Sigmoid colon (tissue), 7 donors: ENCODE measurements at regions of chr9 and their contacts with region 1.

Region 1: DNA sequence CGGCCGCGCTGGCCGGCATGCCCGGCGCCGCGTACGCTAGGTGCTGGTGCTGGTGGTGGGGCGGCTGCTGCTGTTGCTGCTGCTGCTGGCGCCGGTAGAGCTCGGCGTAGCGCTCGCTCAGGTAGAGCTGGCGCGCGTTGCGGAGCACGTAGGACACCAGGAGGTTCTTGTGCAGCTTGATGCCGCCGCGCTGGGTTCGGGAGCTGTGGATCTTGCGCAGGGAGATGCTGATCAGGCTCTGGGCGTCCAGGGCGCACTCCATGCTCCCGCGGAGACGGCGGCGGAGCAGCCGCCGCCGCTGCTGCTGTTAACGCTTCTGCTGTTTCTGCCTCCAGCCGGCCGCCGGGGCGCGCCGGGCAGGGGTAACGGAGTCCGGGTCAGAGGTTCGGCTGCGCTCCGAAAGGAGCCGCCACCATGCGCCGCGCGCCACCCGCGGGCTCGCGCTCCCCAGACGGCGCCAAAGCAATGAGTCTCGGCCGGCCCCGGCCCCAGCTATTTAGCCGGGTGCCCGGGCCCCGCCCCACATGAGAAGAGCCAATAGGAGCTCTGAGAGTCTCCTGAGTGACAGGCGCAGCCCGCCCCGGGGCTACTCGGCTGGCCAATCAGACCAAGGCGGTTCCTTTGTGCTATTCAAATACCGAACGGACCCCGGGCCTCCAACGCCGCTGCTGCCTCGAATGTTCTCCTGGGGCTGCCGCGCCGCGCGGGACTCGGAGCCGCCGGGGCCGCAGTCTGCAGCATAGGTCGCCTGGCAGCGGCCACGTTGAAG is at the start of gene IER5L:
- DNase-seq: peak; percentile 99
- H3K4me3 ChIP-seq: peak within 1 kb of the TSS; percentile 80 to 96 (median 93)
- H3K27ac ChIP-seq: peak within 1 kb of the TSS; percentile 97 to 99 (median 98)
- H3K4me1 ChIP-seq: peaks cover 0 to 34% (median 23%) of the 10 kb centered on the region in 4 donors
- H3K27me3 ChIP-seq: no peaks in the 10 kb centered on the region
- CTCF ChIP-seq: no peak
- EP300 ChIP-seq: no peak
- POLR2A ChIP-seq: peak; percentile 88 to 95
- total RNA-seq, gene IER5L: 4.4 to 17.4 (median 10.2) TPM

Region 2: DNA sequence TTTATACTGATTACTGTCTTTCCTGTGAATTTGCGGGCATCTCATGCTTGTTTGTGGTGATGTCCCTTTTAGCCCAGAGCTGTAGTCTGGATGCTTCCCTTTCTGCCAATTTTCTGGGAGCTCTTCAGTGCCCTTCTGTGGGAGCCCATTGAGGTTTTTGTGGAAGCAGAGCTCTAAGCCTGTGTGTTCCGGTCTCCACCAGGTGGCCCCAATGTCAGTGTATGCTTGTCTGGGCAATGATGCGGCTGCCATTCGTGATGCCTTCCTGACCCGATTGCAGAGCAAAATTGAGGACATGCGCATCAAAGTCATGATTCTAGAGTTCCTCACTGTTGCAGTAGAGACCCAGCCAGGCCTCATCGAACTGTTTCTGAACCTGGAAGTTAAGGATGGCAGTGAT is 185.0 kb before region 1 on chr9:
- intact Hi-C with region 1: no loop called
- DNase-seq: no peak
- H3K4me3 ChIP-seq: no peak overlapping the region
- H3K27ac ChIP-seq: no peak overlapping the region
- H3K4me1 ChIP-seq: peaks cover 0 to 2% (median under 1%) of the 10 kb centered on the region in 4 donors
- H3K27me3 ChIP-seq: no peaks in the 10 kb centered on the region
- CTCF ChIP-seq: no peak
- EP300 ChIP-seq: no peak
- POLR2A ChIP-seq: no peak

Region 3: DNA sequence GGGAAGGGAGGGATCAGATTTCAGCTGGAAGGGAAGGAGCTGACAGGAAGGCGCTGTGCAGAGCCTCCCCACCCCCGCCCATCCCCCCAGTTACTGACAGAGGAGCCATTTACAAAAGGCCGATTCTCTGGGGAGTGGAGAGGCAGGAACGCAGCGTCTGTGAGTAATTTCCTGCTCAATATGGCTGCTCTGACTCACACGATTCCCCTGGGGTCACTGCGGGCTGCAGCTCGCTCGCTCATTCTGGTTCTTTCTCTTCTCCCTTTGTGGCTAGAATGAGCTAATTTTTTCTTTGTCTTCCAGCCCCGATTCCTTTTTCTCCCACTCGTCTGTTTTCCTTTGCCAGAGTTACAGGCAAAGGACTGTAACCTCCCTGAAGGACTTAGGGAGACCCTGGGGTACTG is 38.0 kb before region 1 on chr9:
- intact Hi-C with region 1: loop called (anchors 1 kb)
- DNase-seq: peak; percentile 98
- H3K4me3 ChIP-seq: peak overlapping the region; percentile 36 to 59 (median 50)
- H3K27ac ChIP-seq: peak overlapping the region; percentile 97 to 100 (median 99)
- H3K4me1 ChIP-seq: peaks cover 0 to 73% (median 64%) of the 10 kb centered on the region in 4 donors
- H3K27me3 ChIP-seq: no peaks in the 10 kb centered on the region
- CTCF ChIP-seq: no peak
- EP300 ChIP-seq: peak in 2 of 4 donors; percentile 71 to 76
- POLR2A ChIP-seq: peak; percentile 55 to 62

Region 4: DNA sequence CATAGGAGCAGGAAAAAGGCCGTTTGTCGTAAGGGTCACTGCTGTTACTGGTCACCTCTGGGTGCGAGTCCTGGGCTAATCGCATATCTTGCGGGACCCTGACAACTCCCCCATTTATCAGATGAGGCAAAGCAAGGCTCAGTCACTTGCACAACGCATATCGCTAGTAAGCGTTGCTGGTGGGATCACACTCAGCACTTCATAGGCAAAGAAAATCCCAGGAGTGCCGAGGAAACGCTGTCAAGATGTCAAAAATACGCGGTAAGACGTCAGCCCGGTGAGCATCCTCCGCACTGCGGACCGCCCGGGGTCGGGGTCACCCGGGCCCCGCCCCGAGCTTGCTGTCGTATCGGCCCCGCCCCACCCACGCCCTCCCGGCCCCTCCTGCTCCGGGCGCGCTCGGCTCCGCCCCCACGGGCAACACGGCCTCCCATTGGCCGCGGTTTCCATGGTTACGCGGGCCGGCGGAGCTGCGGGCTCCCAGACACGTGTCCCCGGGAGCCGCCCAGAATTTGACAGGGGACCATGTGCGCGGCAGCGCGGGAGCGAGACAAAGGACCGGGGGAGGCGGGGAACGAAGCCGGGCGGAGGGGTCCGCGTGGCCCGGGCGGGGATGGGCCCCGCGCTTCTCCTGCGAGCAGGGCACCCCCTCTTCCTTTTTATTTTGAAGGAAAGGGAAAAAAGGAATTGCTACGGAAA is 80.3 kb after region 1 on chr9:
- intact Hi-C with region 1: loop called (anchors 5 kb)
- DNase-seq: peak; percentile 95
- H3K4me3 ChIP-seq: peak overlapping the region in 3 of 4 donors; percentile 22 to 33 (median 28)
- H3K27ac ChIP-seq: peak overlapping the region in 1 of 4 donors; percentile 23
- H3K4me1 ChIP-seq: peaks cover 0 to 29% (median 27%) of the 10 kb centered on the region in 4 donors
- H3K27me3 ChIP-seq: peaks cover 0 to 14% (median 0%) of the 10 kb centered on the region in 3 donors
- CTCF ChIP-seq: no peak
- EP300 ChIP-seq: no peak
- POLR2A ChIP-seq: no peak

Region 5: DNA sequence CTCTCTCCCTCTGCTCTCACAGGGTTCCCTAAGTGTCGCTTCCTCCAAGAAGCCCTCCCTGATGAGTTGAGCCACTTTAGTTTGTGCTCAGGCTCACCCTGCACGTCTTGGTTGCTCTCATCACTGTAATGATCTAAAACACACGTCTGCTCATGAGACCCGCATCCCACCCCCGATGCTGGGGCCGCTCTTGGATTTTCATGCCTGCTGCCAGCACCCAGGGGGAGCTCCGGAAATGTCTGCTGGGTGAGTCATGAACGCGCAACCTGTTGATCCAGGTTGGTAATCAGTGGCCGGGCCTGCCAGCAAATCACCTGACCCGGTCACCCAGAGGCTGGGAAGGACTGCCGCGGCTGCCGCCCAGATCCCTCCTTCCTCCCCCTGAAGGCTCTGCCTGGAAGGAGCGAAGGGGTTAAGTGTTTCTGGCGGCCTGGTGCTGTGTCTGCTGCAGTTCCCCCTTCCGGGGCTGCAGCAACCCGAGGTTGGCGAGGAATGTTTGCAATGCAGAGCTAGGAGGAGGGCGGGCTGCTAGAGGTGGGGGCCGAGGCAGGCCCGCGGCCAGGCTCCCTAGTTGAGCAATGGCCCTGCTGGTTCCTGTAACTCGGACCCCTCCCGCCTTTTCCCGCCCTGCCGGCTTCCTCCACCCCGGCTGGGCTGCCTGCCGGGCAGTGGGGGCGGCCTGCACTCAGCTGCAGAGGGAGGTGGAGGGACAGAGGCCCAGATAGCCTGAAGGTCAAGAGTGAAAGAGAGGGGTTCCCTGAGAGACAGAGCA is 156.2 kb after region 1 on chr9:
- intact Hi-C with region 1: loop called (anchors 5 kb)
- DNase-seq: peak; percentile 96
- H3K4me3 ChIP-seq: peak overlapping the region in 3 of 4 donors; percentile 20 to 29 (median 23)
- H3K27ac ChIP-seq: peak overlapping the region; percentile 84 to 89 (median 87)
- H3K4me1 ChIP-seq: peaks cover 0 to 51% (median 40%) of the 10 kb centered on the region in 4 donors
- H3K27me3 ChIP-seq: no peaks in the 10 kb centered on the region
- CTCF ChIP-seq: no peak
- EP300 ChIP-seq: peak in 3 of 4 donors; percentile 5 to 65 (median 15)
- POLR2A ChIP-seq: no peak

Region 6: DNA sequence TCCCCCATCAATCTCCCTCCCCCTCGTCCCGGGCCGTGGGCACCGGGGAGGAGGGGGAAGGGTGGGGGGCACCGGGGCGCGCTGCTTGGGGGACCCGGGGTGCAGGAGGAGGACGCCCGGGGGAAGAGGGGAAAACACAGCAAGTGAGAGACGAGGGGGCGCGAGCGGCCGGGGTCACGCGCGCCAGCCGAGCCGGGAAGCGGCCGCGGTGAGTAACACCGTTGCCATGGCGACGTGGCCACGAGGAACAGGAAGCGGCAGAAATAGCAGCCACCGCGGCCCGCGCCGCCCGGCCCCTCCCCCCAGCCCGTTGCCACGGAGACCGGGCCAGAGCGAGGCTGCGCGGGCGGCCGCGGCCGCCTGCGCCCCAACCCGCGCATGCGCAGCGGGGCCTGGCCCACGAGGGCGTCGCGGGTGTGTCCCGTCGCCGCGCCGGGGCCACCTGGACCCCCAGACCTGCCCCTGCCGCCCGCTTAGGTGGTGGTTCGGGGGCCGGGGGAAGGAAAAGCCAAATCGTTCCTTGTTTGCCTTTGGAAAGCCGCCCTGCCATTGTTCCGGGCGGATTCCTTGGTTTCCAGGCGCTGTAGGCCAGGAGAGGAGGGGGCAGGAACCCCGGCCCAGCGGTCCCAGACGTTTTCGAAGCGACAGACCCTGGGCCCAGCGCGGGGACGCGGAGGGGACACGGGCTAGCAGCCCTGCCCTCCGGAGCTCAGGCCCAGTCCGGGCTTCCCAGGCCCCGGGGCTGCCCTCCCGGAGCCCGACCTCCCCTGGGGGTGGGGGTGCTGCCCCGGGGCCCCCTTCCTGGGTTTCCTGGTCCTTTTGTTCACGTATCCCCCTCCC is 235.8 kb after region 1 on chr9:
- intact Hi-C with region 1: loop called (anchors 2 kb)
- DNase-seq: peak; percentile 99
- H3K4me3 ChIP-seq: peak overlapping the region; percentile 49 to 63 (median 57)
- H3K27ac ChIP-seq: peak overlapping the region; percentile 94 to 100 (median 98)
- H3K4me1 ChIP-seq: peaks cover 0 to 38% (median 32%) of the 10 kb centered on the region in 4 donors
- H3K27me3 ChIP-seq: no peaks in the 10 kb centered on the region
- CTCF ChIP-seq: no peak
- EP300 ChIP-seq: peak in 2 of 4 donors; percentile 41 to 91
- POLR2A ChIP-seq: peak; percentile 74 to 81

Region 7: DNA sequence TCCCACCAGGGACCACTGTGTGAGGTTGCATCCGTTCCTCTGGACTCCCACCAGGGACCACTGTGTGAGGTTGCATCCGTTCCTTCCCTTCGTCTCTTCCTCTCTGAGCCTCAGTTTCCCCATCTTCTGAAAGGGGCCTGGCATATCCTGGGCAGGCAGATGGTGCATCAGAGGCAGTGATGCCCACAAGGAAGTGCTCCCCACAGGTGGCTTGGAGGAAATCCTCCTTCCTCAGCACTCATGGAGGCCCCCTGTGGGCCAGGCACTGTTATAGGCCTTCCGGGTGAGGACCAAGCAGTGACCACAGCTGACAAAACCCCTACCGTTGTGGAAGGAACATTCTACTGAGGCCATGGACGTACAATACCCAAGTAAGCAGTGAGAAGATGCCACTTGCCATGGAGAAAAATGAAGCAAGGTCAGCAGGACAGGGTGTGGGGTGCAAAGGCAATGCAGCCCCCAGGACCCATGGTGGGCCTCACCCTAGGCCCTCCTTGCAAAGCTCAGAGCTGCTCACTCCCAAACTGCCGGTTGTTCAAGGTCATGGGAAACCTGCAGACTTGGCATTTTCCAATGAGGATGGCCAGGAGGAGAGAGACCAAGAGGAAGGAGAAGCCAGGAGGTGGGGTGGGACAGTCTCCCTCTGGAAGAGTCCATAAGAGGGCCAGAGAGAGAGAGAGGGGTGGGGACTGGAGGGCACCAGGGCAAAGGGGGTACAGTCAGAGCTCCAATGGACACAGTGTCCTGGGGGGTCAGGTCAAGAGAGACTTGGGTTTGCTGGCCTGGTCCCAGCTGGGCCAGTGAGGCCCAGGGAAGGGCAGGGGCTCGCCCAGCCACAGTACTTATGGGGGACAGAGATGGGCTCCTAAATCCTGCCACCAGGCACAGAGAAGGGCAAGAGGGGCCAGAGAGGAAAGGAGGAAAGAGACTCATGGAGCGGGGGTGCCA is 391.8 kb after region 1 on chr9:
- intact Hi-C with region 1: loop called (anchors 1 kb)
- DNase-seq: no peak
- H3K4me3 ChIP-seq: peak overlapping the region in 3 of 4 donors; percentile 58 to 74 (median 68)
- H3K27ac ChIP-seq: peak overlapping the region; percentile 76 to 87 (median 81)
- H3K4me1 ChIP-seq: peaks cover 0 to 40% (median 35%) of the 10 kb centered on the region in 4 donors
- H3K27me3 ChIP-seq: no peaks in the 10 kb centered on the region
- CTCF ChIP-seq: peak in 3 of 4 experiments; percentile 22 to 41 (median 28)
- EP300 ChIP-seq: no peak
- POLR2A ChIP-seq: no peak

Region 8: DNA sequence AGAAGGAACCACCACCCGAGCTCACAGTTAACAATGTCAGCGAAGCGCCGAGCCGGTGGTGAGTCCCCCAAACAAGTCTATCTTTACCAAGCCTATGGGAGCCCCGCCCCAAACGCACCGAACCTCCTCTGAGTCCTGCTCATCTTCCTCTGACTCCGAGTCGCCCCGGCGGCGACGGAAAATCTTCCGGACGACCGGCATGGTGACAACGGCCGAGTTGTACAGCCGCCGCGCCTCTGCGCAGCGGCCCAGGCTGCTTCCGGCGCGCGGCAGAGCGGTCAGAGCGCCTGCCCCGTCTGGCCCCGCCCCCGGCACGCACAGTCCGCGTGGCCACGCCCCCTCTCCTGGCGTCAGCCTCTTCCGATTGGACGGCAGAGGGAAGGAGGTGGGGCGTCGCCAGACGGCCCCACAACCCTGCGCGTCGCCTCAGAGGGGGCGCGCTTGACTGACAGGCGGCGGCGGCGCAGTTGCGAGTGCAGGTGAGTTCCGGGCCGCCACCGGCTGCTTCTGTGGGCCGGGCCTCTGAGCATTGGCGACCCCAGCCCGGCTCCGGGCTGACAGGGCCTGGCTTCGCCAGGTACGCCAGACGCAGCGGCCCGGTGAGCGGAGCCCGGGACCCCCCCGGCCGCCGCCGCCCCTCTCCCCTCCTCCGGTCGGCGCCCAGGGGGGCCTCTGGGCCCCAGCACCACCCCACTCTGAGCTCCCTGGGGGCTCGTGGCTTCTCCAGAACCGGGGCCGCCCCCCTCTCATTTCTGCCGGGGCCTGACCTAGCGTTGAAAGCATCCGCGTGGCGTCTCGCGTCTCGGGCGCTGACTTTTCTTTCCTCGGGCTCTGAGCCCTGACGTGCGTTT is 657.3 kb after region 1 on chr9 and contains the starts of genes C9orf78 and USP20:
- intact Hi-C with region 1: no loop called
- DNase-seq: peak; percentile 98
- H3K4me3 ChIP-seq: peak within 1 kb of the TSS; percentile 84 to 99 (median 95)
- H3K27ac ChIP-seq: peak within 1 kb of the TSS; percentile 92 to 98 (median 96)
- H3K4me1 ChIP-seq: peaks cover 0 to 46% (median 40%) of the 10 kb centered on the region in 4 donors
- H3K27me3 ChIP-seq: no peaks in the 10 kb centered on the region
- CTCF ChIP-seq: no peak
- EP300 ChIP-seq: no peak
- POLR2A ChIP-seq: peak; percentile 91 to 96
- total RNA-seq, gene C9orf78: 55.7 to 172 (median 66.0) TPM
- total RNA-seq, gene USP20: 17.5 to 52.1 (median 21.8) TPM